ENCODE measurements at regions of chr14 and their contacts with region 1.

Region 1: GRCh38 chr14:50773632-50774541 is 57.1 kb downstream of the NIN start:
- DNase-seq: no peak
- H3K4me3 ChIP-seq: no peak overlapping the region
- H3K27ac ChIP-seq: peak overlapping the region in 1 of 8 donors; percentile 16
- H3K4me1 ChIP-seq: peaks cover 2 to 34% (median 14%) of the 10 kb centered on the region in 6 donors
- H3K27me3 ChIP-seq: no peaks in the 10 kb centered on the region
- CTCF ChIP-seq: peak in 10 of 11 experiments; percentile 33 to 83 (median 70)
- POLR2A ChIP-seq: no peak

Region 2: GRCh38 chr14:50542941-50543418 is 230.9 kb before region 1 on chr14:
- intact Hi-C with region 1: loop called (anchors 10 kb)
- DNase-seq: no peak
- H3K4me3 ChIP-seq: no peak overlapping the region
- H3K27ac ChIP-seq: no peak overlapping the region
- H3K4me1 ChIP-seq: peaks cover 0 to 7% (median 0%) of the 10 kb centered on the region in 6 donors
- H3K27me3 ChIP-seq: no peaks in the 10 kb centered on the region
- CTCF ChIP-seq: peak in 10 of 11 experiments; percentile 17 to 62 (median 46)
- POLR2A ChIP-seq: no peak

Region 3: GRCh38 chr14:50599700-50600444 is 174.0 kb before region 1 on chr14:
- intact Hi-C with region 1: loop called (anchors 10 kb)
- DNase-seq: no peak
- H3K4me3 ChIP-seq: no peak overlapping the region
- H3K27ac ChIP-seq: no peak overlapping the region
- H3K4me1 ChIP-seq: no peaks in the 10 kb centered on the region
- H3K27me3 ChIP-seq: no peaks in the 10 kb centered on the region
- CTCF ChIP-seq: peak in 10 of 11 experiments; percentile 13 to 59 (median 41)
- POLR2A ChIP-seq: no peak